Colonic mucosa (tissue), 4 donors: ENCODE measurements at regions of chr14 and their contacts with region 1.

Region 1: DNA sequence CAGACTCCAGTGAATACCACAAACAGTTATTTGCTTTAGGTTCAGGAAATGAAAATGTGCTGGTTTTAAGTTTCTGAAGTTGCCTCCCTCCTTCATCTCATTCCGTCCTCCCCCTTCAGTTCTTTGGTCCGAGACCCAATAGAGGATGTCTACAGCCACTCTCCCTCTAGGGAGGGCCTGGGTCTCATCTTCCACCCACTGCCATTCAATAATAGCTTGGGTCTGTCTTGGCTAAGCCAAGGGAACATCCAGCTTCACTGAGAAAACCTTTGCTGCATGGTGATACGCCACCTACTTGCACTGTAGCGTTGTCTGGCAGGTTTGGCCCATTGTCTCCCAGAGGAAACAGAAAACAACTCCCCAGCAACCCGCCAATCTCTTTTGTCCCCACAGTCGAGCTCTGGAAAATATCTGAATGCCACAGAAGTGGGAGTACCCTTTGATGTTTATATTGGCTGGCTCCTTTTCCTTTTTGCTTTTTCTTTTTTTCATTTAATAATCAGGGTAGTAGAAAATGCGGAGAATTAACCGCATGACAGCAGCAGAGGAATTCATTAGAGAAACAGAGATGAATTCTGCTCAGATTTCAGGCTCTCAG is 380.1 kb downstream of the RAD51B start:
- DNase-seq: no peak
- H3K4me3 ChIP-seq: no peak overlapping the region
- H3K27ac ChIP-seq: peak overlapping the region; percentile 13
- H3K4me1 ChIP-seq: no peaks in the 10 kb centered on the region
- H3K27me3 ChIP-seq: no peaks in the 10 kb centered on the region
- CTCF ChIP-seq: no peak

Region 2: GRCh38 chr14:68232300-68233055 is 32.8 kb after region 1 on chr14:
- intact Hi-C with region 1: loop called (anchors 5 kb)
- DNase-seq: peak; percentile 70
- H3K4me3 ChIP-seq: no peak overlapping the region
- H3K27ac ChIP-seq: peak overlapping the region; percentile 74
- H3K4me1 ChIP-seq: peaks cover 8% of the 10 kb centered on the region
- H3K27me3 ChIP-seq: no peaks in the 10 kb centered on the region
- CTCF ChIP-seq: no peak